ENCODE measurements at regions of chr11 and their contacts with region 1.

Region 1: DNA sequence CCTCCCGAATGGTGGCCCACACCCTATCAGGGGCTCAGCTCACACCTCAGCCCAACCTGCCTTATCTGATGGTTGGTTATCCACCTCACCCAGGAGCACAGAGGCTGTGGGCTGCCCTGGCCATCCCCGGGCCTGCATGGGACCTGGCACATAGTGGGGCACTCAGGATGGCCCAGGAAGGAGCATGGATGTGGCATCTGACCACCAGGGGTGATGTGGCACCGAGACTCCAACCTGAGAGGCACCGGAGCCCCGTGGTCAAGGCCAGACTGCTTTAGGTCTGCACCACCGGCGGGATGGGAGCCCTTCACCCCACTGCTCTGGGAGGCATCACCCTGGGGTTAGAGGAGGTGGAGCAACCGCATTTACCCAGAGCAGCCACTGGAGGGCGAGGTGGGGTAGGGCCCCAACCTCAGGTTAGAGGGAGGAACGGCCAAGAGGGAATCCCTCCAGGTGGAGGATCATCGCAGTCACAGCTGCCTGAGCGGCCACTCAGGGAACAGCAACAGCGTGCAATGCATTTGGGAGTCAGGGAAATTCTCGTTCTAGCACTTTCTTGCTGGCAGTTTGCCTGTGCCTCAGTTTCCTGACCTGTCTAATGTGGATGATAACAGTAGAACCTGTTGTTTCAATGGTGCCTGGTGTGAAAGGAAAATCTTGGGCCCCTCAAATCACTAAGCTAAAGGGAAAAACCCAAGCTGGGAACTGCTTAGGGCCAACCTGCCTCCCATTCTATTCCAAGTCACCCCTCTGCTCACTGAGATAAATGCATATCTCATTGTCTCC is 52.9 kb upstream of the CARS1 start:
- H3K4me3 Mint-ChIP-seq: no peak overlapping the region
- H3K27ac Mint-ChIP-seq: peak overlapping the region; percentile 54
- H3K4me1 Mint-ChIP-seq: peaks cover 32% of the 10 kb centered on the region
- H3K27me3 Mint-ChIP-seq: no peaks in the 10 kb centered on the region

Region 2: GRCh38 chr11:3021125-3021524 is 89.0 kb before region 1 on chr11:
- intact Hi-C with region 1: no loop called
- H3K4me3 Mint-ChIP-seq: no peak overlapping the region
- H3K27ac Mint-ChIP-seq: no peak overlapping the region
- H3K4me1 Mint-ChIP-seq: peaks cover 36% of the 10 kb centered on the region
- H3K27me3 Mint-ChIP-seq: no peaks in the 10 kb centered on the region

Region 3: DNA sequence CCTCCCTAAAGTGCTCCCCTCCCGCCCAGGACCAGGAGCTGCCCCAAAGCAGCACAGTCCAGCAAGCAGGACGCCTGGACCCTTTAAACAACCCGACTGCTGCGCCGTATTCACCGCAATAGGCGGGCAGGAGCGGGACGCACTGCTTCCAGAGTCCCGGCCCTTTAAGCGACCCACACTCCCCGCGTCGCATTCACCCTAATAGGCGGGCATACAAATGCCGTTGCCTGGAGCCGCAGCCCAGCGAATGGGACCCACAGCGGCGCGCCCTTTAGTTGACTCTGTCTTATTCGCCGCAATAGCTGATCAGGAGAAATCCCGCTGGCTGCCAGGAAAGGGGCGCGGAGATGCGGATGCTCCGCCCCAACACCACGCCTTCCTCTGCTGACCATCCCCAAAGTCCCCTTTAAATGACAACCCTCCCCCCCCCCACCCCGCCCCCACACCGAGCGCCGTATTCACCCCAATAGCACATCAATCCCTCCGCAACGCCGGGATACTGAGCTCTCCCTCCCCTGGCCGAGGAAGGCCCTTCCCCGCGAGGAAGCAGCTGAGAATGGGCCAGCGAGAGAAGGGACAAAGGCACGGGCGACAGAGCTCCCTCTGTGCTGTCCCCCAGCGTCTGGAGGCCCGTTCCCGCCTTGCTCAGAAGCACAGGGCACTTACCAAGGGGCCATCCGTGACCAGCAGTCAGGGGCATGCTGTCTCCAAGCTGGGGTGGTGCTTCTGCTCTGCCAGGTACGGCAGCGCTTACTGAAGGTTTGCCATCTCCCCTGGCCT is 50.3 kb after region 1 on chr11:
- intact Hi-C with region 1: no loop called
- H3K4me3 Mint-ChIP-seq: peak overlapping the region; percentile 78
- H3K27ac Mint-ChIP-seq: peak overlapping the region; percentile 30
- H3K4me1 Mint-ChIP-seq: peaks cover 87% of the 10 kb centered on the region
- H3K27me3 Mint-ChIP-seq: no peaks in the 10 kb centered on the region

Region 4: GRCh38 chr11:3195251-3196160 is 85.4 kb after region 1 on chr11:
- intact Hi-C with region 1: no loop called
- H3K4me3 Mint-ChIP-seq: no peak overlapping the region
- H3K27ac Mint-ChIP-seq: no peak overlapping the region
- H3K4me1 Mint-ChIP-seq: peaks cover 7% of the 10 kb centered on the region
- H3K27me3 Mint-ChIP-seq: peaks cover 59% of the 10 kb centered on the region

Region 5: GRCh38 chr11:3217676-3218482 is 107.8 kb after region 1 on chr11:
- intact Hi-C with region 1: loop called (anchors 5 kb)
- H3K4me3 Mint-ChIP-seq: no peak overlapping the region
- H3K27ac Mint-ChIP-seq: peak overlapping the region; percentile 47
- H3K4me1 Mint-ChIP-seq: peaks cover 46% of the 10 kb centered on the region
- H3K27me3 Mint-ChIP-seq: peaks cover 78% of the 10 kb centered on the region

Measured in dendritic cell treated with granulocyte-macrophage colony-stimulating factor and Interleukin-4, amounts not matched to agents 40 ng/mL and 50 ng/mL, for 4 days (primary cell).